Spleen (tissue), 13 donors: ENCODE measurements at regions of chr5 and their contacts with region 1.

Region 1: GRCh38 chr5:115831163-115831768 is 10.1 kb downstream of the ATG12 start:
- DNase-seq: no peak
- H3K4me3 ChIP-seq: no peak overlapping the region
- H3K27ac ChIP-seq: no peak overlapping the region
- H3K4me1 ChIP-seq: peaks cover 0 to 14% (median under 1%) of the 10 kb centered on the region in 6 donors
- H3K27me3 ChIP-seq: no peaks in the 10 kb centered on the region
- CTCF ChIP-seq: peak; percentile 37 to 79 (median 67)
- POLR2A ChIP-seq: no peak

Region 2: GRCh38 chr5:115634343-115635132 is 196.7 kb before region 1 on chr5:
- intact Hi-C with region 1: loop called (anchors 5 kb)
- DNase-seq: peak; percentile 94
- H3K4me3 ChIP-seq: peak overlapping the region in 7 of 8 donors; percentile 17 to 57 (median 33)
- H3K27ac ChIP-seq: peak overlapping the region in 7 of 8 donors; percentile 57 to 83 (median 71)
- H3K4me1 ChIP-seq: peaks cover 0 to 15% (median 11%) of the 10 kb centered on the region in 6 donors
- H3K27me3 ChIP-seq: peaks cover 0 to 7% (median 0%) of the 10 kb centered on the region in 7 donors
- CTCF ChIP-seq: peak; percentile 81 to 96 (median 94)
- POLR2A ChIP-seq: no peak

Region 3: GRCh38 chr5:115873392-115873791 is 42.1 kb after region 1 on chr5:
- intact Hi-C with region 1: no loop called
- DNase-seq: no peak
- H3K4me3 ChIP-seq: no peak overlapping the region
- H3K27ac ChIP-seq: no peak overlapping the region
- H3K4me1 ChIP-seq: no peaks in the 10 kb centered on the region
- H3K27me3 ChIP-seq: no peaks in the 10 kb centered on the region
- CTCF ChIP-seq: no peak
- POLR2A ChIP-seq: no peak